Left ventricle myocardium inferior (tissue), 1 donor: ENCODE measurements at regions of chr13 and their contacts with region 1.

Region 1: DNA sequence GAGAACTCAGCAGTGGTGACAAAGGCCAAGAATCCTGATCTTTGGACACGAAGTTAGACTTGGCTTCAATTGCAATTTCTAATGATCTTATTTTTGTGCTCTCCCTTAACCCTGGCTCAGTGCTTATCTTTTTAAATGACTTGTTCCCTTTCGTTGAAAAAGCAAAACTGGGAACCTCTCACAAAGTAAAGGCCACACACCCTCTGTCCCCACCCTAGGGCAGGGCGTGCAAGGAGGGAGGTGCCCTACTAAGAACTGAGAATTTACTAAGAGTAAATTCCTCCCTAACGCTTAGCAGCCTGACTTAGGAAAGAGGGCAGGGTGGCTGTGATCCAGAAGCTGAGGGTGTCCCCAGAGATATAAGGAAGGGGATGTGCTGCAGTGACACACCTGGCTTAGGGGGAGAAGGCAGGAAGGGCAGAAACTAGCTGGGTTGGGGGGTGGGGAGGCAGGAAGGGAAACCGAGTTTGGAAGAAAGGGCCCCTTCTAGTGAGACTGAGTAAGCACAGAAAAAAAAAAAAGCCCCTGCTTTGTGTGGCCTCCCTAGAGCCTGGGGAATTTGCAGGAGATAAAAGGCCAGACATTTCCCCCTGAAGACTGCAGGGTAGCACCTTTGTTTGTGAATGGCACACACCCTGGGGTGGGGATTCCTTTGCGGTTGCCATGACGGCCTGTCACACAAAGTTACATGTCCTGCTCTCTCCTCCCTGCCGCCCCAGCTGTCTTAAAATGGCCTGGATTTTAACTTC is 435.1 kb downstream of the EFNB2 start:
- DNase-seq: no peak
- H3K4me3 ChIP-seq: no peak overlapping the region
- H3K27ac ChIP-seq: peak overlapping the region; percentile 15
- H3K4me1 ChIP-seq: peaks cover 7% of the 10 kb centered on the region
- H3K27me3 ChIP-seq: peaks cover 5% of the 10 kb centered on the region
- CTCF ChIP-seq: no peak

Region 2: DNA sequence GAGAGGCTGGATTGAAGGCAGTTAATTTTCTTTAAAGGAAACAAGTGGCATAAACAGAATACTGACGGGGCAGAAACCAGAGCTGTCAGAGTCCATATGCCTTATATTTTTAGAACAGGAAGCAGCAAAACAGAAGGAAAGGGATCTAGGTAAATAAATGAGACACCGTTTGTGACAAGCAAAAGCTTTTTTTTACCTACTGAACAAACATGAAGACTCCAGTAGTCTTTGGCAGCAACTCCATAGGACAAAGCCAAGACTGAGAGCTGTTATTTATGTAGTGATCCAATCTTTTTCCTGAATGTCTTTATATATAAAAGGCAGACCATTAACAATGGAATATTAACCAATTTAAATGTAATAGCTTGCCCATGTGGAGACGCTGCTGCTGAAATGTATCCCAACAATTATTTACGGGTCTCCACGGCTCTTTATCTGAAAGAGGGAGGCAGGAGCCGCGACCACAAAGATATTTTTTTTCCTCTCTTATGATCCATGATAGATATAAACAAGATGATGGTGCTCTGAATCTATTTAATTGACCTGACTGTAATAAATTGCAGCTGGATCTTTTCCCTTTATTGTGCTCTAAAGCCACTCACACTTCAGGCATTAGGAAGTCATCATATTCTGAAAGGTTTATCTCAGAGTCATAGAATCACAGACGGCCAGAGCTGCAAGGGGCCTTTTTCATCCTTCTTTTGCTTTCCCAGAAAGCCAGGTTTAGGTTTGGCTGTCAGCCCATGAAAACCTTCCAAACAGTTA is 252.6 kb before region 1 on chr13:
- intact Hi-C with region 1: loop called (anchors 10 kb)
- DNase-seq: no peak
- H3K4me3 ChIP-seq: no peak overlapping the region
- H3K27ac ChIP-seq: no peak overlapping the region
- H3K4me1 ChIP-seq: peaks cover 6% of the 10 kb centered on the region
- H3K27me3 ChIP-seq: no peaks in the 10 kb centered on the region
- CTCF ChIP-seq: no peak

Region 3: DNA sequence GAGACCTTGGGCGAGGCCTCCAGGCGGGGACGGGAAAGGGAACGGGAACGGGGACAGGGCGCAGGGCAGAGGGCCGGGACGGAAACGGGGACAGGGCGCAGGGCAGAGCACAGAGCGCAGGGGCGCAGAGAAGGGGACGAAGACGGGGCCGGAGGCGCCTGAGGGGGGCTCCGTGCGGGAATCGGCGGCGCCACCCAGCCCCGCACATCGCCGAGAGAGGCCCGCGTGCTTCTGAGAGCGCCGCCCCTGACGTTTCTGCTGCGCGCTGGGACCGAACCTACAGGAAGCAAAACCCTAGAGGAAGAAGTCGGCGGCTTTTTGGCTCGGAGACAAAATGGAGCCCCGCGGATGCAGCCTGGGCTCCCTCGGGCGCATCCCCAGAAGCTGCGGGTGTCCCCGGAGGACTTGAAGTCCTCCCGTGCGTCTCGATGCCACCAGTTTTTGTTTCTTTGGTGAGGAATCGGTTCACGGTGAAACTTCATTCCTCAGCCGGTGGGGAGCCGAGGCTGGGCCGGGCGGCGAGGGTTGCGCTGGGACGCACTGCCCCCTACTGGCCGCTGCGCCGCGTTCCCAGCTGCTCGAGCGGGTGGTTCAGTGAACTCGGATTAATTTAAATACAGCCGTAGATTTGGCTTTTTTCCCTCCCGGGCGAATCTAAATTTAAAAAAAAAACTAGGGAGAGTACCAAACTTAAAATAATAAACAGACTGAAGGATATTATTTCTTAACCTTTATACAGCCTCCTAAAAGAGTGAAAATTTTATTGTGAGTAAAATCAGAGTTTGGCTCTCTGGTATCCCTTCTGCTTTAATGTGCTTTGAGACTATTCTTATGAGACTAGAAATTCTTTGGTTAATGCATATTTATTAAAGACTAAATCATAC is 817.6 kb after region 1 on chr13:
- intact Hi-C with region 1: no loop called
- DNase-seq: peak; percentile 79
- H3K4me3 ChIP-seq: peak overlapping the region; percentile 67
- H3K27ac ChIP-seq: peak overlapping the region; percentile 91
- H3K4me1 ChIP-seq: peaks cover 27% of the 10 kb centered on the region
- H3K27me3 ChIP-seq: peaks cover 13% of the 10 kb centered on the region
- CTCF ChIP-seq: peak; percentile 94